Mammary epithelial cell (primary cell): ENCODE measurements at regions of chr18 and their contacts with region 1.

Region 1: GRCh38 chr18:59697236-59697932 is at the start of gene CCBE1:
- DNase-seq: peak; percentile 78
- H3K4me3 ChIP-seq: peak within 1 kb of the TSS; percentile 42 to 85 (median 78)
- H3K27ac ChIP-seq: no peak within 1 kb of the TSS
- H3K4me1 ChIP-seq: peaks cover 30% of the 10 kb centered on the region
- H3K27me3 ChIP-seq: no peaks in the 10 kb centered on the region
- CTCF ChIP-seq: peak; percentile 86 to 98
- total RNA-seq, gene CCBE1: 0.50 to 18.4 TPM

Region 2: GRCh38 chr18:59459369-59460079 is 237.9 kb before region 1 on chr18:
- CTCF ChIA-PET with region 1: interaction called, 4 read pairs
- dilution Hi-C with region 1: no loop called
- in situ Hi-C with region 1: no loop called
- intact Hi-C with region 1: loop called (anchors 1 kb)
- DNase-seq: peak; percentile 19
- H3K4me3 ChIP-seq: no peak overlapping the region
- H3K27ac ChIP-seq: no peak overlapping the region
- H3K4me1 ChIP-seq: peaks cover 6% of the 10 kb centered on the region
- H3K27me3 ChIP-seq: no peaks in the 10 kb centered on the region
- CTCF ChIP-seq: peak; percentile 52 to 53

Region 3: DNA sequence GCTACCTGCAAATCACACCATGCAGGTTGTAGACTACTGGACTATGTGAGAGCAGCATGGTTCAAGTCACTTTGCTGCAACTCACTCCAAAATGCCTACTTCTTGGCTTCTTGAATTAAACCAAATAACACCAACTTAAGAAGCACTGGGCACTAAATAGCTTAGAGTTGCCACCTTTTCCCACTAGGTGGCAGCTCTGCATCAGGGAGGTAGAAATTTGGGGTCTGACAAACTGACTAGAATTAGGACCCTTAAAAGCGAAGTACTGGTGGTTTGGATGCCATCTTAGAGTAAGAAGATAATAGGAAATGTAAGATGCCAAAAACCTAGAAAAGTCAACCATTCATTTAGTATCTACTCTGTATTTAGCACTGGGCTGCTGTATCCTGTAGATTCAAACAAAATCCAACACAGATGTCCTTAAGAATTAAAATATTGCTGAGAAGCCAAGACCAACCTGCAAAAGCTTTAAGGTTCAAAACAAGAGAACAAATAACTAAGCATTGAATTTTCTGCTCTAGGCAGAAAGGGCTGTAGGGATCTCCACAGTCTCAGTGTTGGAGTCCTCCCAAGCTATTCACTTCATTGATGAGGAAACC is 65.7 kb before region 1 on chr18:
- CTCF ChIA-PET with region 1: interaction called, 5 read pairs
- dilution Hi-C with region 1: no loop called
- in situ Hi-C with region 1: loop called in 1 of 2 experiments (anchors 10 kb)
- intact Hi-C with region 1: loop called (anchors 1 kb)
- DNase-seq: peak; percentile 23
- H3K4me3 ChIP-seq: no peak overlapping the region
- H3K27ac ChIP-seq: no peak overlapping the region
- H3K4me1 ChIP-seq: no peaks in the 10 kb centered on the region
- H3K27me3 ChIP-seq: no peaks in the 10 kb centered on the region
- CTCF ChIP-seq: peak; percentile 73 to 90

Region 4: DNA sequence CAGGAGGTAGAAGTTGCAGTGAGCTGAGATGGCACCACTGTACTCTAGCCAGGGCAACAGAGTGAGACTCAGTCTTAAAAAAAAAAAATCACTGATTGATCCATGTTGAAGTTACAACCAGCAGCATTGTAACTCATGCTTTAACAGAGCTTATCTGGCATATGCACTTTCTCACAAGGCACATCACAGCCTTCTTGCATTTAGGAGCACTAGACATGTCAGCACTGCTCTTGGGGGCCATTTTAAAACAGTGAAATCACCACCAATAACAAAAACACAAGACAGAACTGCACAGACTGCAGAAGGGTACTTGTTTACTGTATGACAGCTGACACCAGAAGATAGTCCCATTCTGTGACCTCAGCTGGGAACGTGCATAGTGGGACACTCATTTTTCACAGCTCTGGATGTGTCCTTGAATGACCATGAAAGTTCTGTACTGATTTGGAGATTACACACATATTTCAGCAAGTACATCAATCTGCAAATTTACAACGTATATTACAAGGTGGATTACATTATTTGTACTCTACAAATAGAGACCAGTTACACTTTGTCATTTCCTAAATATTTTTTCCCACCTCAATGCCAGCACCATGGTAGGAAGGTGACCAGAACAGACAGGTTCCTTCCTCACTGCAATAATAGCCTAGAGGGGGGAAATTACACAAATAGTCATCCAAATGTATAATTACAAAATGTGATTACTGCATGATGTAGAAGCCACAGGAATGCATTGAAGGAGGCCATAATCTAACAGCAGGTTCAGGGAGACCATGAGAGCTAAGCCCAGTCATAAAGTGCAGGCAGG is 35.3 kb before region 1 on chr18:
- CTCF ChIA-PET with region 1: interaction called, 4 read pairs
- dilution Hi-C with region 1: no loop called
- in situ Hi-C with region 1: no loop called
- intact Hi-C with region 1: loop called (anchors 1 kb)
- DNase-seq: peak; percentile 96
- H3K4me3 ChIP-seq: no peak overlapping the region
- H3K27ac ChIP-seq: peak overlapping the region; percentile 83
- H3K4me1 ChIP-seq: peaks cover 44% of the 10 kb centered on the region
- H3K27me3 ChIP-seq: no peaks in the 10 kb centered on the region
- CTCF ChIP-seq: no peak

Region 5: DNA sequence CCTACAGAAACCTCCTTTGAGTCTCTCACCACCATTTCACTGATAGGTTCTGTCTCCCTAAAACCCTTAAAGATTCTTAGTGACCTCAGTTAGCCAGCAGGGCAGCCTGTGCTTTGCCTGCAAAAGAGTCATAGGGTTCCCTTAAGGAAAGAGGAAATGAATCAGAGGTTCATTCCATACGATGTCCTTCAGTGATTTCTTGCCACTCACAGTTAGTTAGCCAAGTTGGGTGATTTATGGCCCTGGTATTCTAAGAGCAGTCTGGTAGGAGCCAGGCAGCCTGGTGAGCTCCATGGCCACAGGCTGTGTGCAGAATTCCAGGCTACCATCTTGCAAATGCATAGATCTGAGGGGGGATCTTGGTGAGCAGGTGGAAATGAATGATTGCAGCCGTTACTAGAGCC is 18.6 kb after region 1 on chr18:
- CTCF ChIA-PET with region 1: no interaction called
- dilution Hi-C with region 1: no loop called
- in situ Hi-C with region 1: no loop called
- intact Hi-C with region 1: loop called (anchors 1 kb)
- DNase-seq: peak; percentile 91
- H3K4me3 ChIP-seq: no peak overlapping the region
- H3K27ac ChIP-seq: no peak overlapping the region
- H3K4me1 ChIP-seq: peaks cover 45% of the 10 kb centered on the region
- H3K27me3 ChIP-seq: no peaks in the 10 kb centered on the region
- CTCF ChIP-seq: peak; percentile 3 to 25

Region 6: DNA sequence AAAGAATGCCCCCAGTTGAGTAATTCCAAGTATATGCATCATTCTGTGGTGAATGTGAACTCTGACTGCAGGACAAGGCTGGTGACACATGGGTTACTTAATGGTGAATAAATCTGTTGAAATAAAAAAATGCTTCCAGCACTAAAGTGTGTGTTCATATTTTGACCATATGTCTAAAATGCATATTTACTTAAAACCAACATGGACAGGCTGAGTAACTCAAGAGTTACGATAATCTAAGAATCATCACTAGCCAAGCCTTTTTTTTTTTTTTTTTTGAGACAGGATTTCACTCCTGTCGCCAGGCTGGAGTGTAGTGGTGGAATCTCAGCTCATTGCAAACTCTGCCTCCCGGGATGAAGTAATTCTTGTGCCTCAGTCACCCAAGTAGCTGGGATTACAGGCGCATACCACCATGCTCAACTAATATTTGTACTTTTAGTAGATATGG is 46.9 kb after region 1 on chr18:
- CTCF ChIA-PET with region 1: no interaction called
- dilution Hi-C with region 1: no loop called
- in situ Hi-C with region 1: no loop called
- intact Hi-C with region 1: loop called (anchors 2 kb)
- DNase-seq: peak; percentile 83
- H3K4me3 ChIP-seq: no peak overlapping the region
- H3K27ac ChIP-seq: peak overlapping the region; percentile 25
- H3K4me1 ChIP-seq: peaks cover 28% of the 10 kb centered on the region
- H3K27me3 ChIP-seq: no peaks in the 10 kb centered on the region
- CTCF ChIP-seq: no peak

Region 7: DNA sequence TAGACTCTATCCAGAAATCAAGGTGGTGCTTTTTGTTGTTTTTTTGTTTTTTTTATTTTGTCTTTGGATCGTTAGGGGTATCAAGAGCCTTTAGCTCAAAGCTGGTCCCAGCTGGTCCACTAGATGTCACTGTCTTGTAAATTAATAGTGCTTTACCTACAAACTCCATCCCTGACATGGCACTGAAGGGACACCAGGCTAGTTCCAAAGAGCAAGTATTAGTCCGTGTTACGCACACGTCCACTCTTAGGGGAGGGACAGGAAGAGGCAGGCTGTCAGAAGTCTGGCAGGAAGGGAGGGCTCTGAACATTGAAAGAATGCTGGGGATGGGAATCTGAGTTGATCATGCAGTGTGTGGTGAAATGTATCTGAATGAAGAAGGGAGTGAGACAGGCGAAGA is 85.8 kb after region 1 on chr18:
- CTCF ChIA-PET with region 1: interaction called, 10 read pairs
- dilution Hi-C with region 1: no loop called
- in situ Hi-C with region 1: no loop called
- intact Hi-C with region 1: loop called (anchors 2 kb)
- DNase-seq: peak; percentile 47
- H3K4me3 ChIP-seq: no peak overlapping the region
- H3K27ac ChIP-seq: no peak overlapping the region
- H3K4me1 ChIP-seq: peaks cover 21% of the 10 kb centered on the region
- H3K27me3 ChIP-seq: no peaks in the 10 kb centered on the region
- CTCF ChIP-seq: peak; percentile 58 to 68

Region 8: GRCh38 chr18:60266558-60266957 is 569.2 kb after region 1 on chr18:
- CTCF ChIA-PET with region 1: no interaction called
- dilution Hi-C with region 1: no loop called
- in situ Hi-C with region 1: no loop called
- intact Hi-C with region 1: no loop called
- DNase-seq: no peak
- H3K4me3 ChIP-seq: no peak overlapping the region
- H3K27ac ChIP-seq: no peak overlapping the region
- H3K4me1 ChIP-seq: no peaks in the 10 kb centered on the region
- H3K27me3 ChIP-seq: no peaks in the 10 kb centered on the region
- CTCF ChIP-seq: no peak